ENCODE measurements at regions of chr17 and their contacts with region 1.

Region 1: GRCh38 chr17:44533533-44534246 is 23.6 kb upstream of the FZD2 start:
- DNase-seq: peak; percentile 86 to 90
- ATAC-seq: peak; percentile 91 to 95 (median 92)
- H3K4me3 ChIP-seq: peak overlapping the region in 3 of 10 donors; percentile 7 to 33 (median 9)
- H3K27ac ChIP-seq: peak overlapping the region in 5 of 10 donors; percentile 28 to 57 (median 54)
- H3K4me1 ChIP-seq: peaks cover 0 to 24% (median 0%) of the 10 kb centered on the region in 9 donors
- H3K27me3 ChIP-seq: peaks cover 0 to 2% (median 0%) of the 10 kb centered on the region in 7 donors
- CTCF ChIP-seq: peak; percentile 81 to 96 (median 92)

Region 2: DNA sequence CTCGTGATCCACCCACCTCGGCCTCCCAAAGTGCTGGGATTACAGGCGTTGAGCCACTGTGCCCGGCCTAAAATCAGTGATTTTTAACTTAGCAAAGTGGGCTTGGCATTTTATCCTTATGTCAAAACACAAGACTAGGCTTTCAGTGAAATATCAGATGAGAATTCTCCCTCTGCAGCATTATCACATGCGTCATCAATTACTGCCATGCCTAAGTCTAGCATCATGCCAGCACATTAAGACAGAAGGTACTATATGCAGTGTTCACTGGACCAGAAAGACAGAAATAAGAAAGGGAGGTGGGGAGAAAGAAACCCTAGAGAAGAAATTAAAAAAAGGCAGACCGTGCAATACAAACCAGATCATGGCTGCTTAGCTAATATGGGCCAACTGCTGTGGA is 60.3 kb before region 1 on chr17:
- intact Hi-C with region 1: no loop called
- DNase-seq: no peak
- ATAC-seq: no peak
- H3K4me3 ChIP-seq: no peak overlapping the region
- H3K27ac ChIP-seq: no peak overlapping the region
- H3K4me1 ChIP-seq: peaks cover 0 to 12% (median 0%) of the 10 kb centered on the region in 9 donors
- H3K27me3 ChIP-seq: no peaks in the 10 kb centered on the region
- CTCF ChIP-seq: no peak

Region 3: GRCh38 chr17:44623070-44623725 is 89.5 kb after region 1 on chr17:
- intact Hi-C with region 1: no loop called
- DNase-seq: no peak
- ATAC-seq: no peak
- H3K4me3 ChIP-seq: no peak overlapping the region
- H3K27ac ChIP-seq: no peak overlapping the region
- H3K4me1 ChIP-seq: peaks cover 0 to 13% (median 4%) of the 10 kb centered on the region in 9 donors
- H3K27me3 ChIP-seq: peaks cover 0 to 16% (median 0%) of the 10 kb centered on the region in 7 donors
- CTCF ChIP-seq: no peak

Region 4: GRCh38 chr17:44636562-44636961 is 102.9 kb after region 1 on chr17:
- intact Hi-C with region 1: loop called (anchors 1 to 5 kb)
- DNase-seq: no peak
- ATAC-seq: peak in 3 of 8 donors; percentile 42 to 50 (median 45)
- H3K4me3 ChIP-seq: no peak overlapping the region
- H3K27ac ChIP-seq: no peak overlapping the region
- H3K4me1 ChIP-seq: no peaks in the 10 kb centered on the region
- H3K27me3 ChIP-seq: peaks cover 0 to 15% (median 0%) of the 10 kb centered on the region in 7 donors
- CTCF ChIP-seq: peak in 8 of 9 donors; percentile 8 to 65 (median 52)

Region 5: GRCh38 chr17:44672479-44673093 is 138.9 kb after region 1 on chr17:
- intact Hi-C with region 1: loop called in 2 of 10 experiments (anchors 10 kb)
- DNase-seq: no peak
- ATAC-seq: no peak
- H3K4me3 ChIP-seq: no peak overlapping the region
- H3K27ac ChIP-seq: no peak overlapping the region
- H3K4me1 ChIP-seq: no peaks in the 10 kb centered on the region
- H3K27me3 ChIP-seq: no peaks in the 10 kb centered on the region
- CTCF ChIP-seq: peak in 8 of 9 donors; percentile 11 to 64 (median 52)